HepG2 (cell line): ENCODE measurements at regions of chrX and their contacts with region 1.

Region 1: DNA sequence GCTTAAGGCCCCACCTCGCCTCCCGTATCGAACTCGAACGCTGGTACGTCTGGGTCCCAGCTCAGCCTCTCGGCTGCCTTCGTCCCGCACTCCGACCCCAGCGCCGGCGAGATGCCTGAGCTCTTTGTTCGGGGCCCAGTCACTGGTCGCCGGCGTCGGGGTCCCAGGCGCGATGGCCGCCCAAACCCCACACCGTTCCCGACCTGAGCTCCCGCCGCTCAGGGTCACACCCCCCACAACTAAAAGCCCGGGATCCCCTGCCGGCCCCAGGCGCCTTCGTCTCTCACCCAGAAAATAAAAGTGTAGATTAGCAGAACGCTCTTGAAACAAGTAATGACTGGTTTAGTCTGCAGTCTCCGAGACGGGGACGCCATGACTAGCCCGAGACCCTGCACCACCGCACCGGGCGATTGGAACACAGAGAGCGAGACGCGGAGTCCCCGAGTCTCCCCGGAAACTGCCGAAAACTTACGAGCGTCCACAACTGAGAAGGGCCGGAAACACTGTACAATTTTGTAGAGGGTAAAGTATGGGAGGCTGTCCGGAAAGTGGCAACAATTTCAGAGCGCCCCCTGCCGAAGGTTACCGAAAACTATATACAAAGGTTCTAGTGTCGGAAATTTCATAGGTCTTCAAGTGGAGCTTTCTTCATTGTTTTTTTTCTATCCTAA is at the start of gene TSPAN6:
- DNase-seq: peak; percentile 86
- ATAC-seq: peak; percentile 99
- H3K4me3 ChIP-seq: peak within 1 kb of the TSS; percentile 66 to 77 (median 73)
- H3K27ac ChIP-seq: peak within 1 kb of the TSS; percentile 92
- H3K4me1 ChIP-seq: peaks cover 30% of the 10 kb centered on the region; the same call in 1 of the 2 replicates
- H3K27me3 ChIP-seq: no peaks in the 10 kb centered on the region; a peak in 1 of 5 replicates
- CTCF ChIP-seq: peak; percentile 67
- EP300 ChIP-seq: no peak
- POLR2A ChIP-seq: peak; percentile 51 to 52; a peak in 2 of 4 replicates
- RAD21 ChIP-seq: 0 out of 2 replicates have a peak, but pooled peaks have one; percentile 18
- total RNA-seq, gene TSPAN6: 78.4 and 133 TPM in 2 replicates

Region 2: DNA sequence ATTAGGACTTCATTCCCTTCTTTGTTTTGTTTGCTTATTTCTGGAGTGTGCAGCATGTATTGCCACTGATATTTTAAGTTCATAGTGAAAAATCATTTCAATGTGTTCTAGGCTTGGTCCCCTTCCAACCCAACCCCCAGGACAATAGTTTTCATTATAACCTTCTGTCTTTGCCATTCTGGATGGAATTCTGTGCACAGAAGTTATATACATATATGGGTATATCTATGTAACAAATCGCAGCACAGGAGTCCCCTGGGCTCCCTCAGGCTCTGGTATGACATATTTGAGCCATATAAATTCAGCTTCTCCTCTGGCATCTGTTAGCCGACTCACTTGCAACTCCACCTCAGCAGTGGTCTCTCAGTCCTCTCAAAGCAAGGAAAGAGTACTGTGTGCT is 51.8 kb before region 1 on chrX and contains the start of gene TNMD:
- CTCF ChIA-PET with region 1: no interaction called
- POLR2A ChIA-PET with region 1: no interaction called
- in situ Hi-C with region 1: no loop called
- intact Hi-C with region 1: no loop called
- DNase-seq: no peak
- ATAC-seq: no peak
- H3K4me3 ChIP-seq: no peak within 1 kb of the TSS
- H3K27ac ChIP-seq: no peak within 1 kb of the TSS
- H3K4me1 ChIP-seq: no peaks in the 10 kb centered on the region
- H3K27me3 ChIP-seq: no peaks in the 10 kb centered on the region
- CTCF ChIP-seq: no peak
- EP300 ChIP-seq: no peak
- POLR2A ChIP-seq: no peak
- RAD21 ChIP-seq: no peak
- total RNA-seq, gene TNMD: not detected in 2 replicates

Region 3: GRCh38 chrX:100615005-100615404 is 21.5 kb before region 1 on chrX:
- CTCF ChIA-PET with region 1: no interaction called
- POLR2A ChIA-PET with region 1: interaction called, 11 read pairs
- in situ Hi-C with region 1: no loop called
- intact Hi-C with region 1: no loop called
- DNase-seq: peak; percentile 57
- ATAC-seq: peak; percentile 79
- H3K4me3 ChIP-seq: no peak overlapping the region
- H3K27ac ChIP-seq: no peak overlapping the region
- H3K4me1 ChIP-seq: peaks cover 8% of the 10 kb centered on the region; the same call in 1 of the 2 replicates
- H3K27me3 ChIP-seq: no peaks in the 10 kb centered on the region
- CTCF ChIP-seq: peak; percentile 50
- EP300 ChIP-seq: no peak
- POLR2A ChIP-seq: no peak
- RAD21 ChIP-seq: no peak

Region 4: GRCh38 chrX:100649550-100650356 is 13.3 kb after region 1 on chrX:
- CTCF ChIA-PET with region 1: no interaction called
- POLR2A ChIA-PET with region 1: interaction called, 67 read pairs
- in situ Hi-C with region 1: no loop called
- intact Hi-C with region 1: loop called (anchors 1 kb)
- DNase-seq: peak; percentile 90
- ATAC-seq: peak; percentile 93
- H3K4me3 ChIP-seq: peak overlapping the region; percentile 41 to 57 (median 52); a peak in 5 of 6 replicates
- H3K27ac ChIP-seq: peak overlapping the region; percentile 97
- H3K4me1 ChIP-seq: peaks cover 82% of the 10 kb centered on the region
- H3K27me3 ChIP-seq: no peaks in the 10 kb centered on the region
- CTCF ChIP-seq: 0 out of 2 replicates have a peak, but pooled peaks have one; percentile 13
- EP300 ChIP-seq: peak in 1 of 2 experiments; percentile 66; a peak in 1 of 4 replicates
- POLR2A ChIP-seq: peak; percentile 30 to 48; a peak in 3 of 4 replicates
- RAD21 ChIP-seq: no peak

Region 5: GRCh38 chrX:100721328-100721727 is 84.9 kb after region 1 on chrX:
- CTCF ChIA-PET with region 1: no interaction called
- POLR2A ChIA-PET with region 1: no interaction called
- in situ Hi-C with region 1: no loop called
- intact Hi-C with region 1: no loop called
- DNase-seq: no peak
- ATAC-seq: no peak
- H3K4me3 ChIP-seq: no peak overlapping the region
- H3K27ac ChIP-seq: no peak overlapping the region
- H3K4me1 ChIP-seq: no peaks in the 10 kb centered on the region
- H3K27me3 ChIP-seq: no peaks in the 10 kb centered on the region
- CTCF ChIP-seq: no peak
- EP300 ChIP-seq: no peak
- POLR2A ChIP-seq: no peak
- RAD21 ChIP-seq: no peak